Activated CD8-positive, alpha-beta T cell treated with anti-CD3 and anti-CD28 coated beads for 36 hours (primary cell): ENCODE measurements at regions of chr3 and their contacts with region 1.

Region 1: GRCh38 chr3:40452876-40453730 is 4.0 kb upstream of the RPL14 start:
- DNase-seq: peak; percentile 99
- ATAC-seq: peak; percentile 93
- H3K4me3 Mint-ChIP-seq: peak overlapping the region; percentile 94
- H3K27ac Mint-ChIP-seq: peak overlapping the region; percentile 93
- H3K4me1 Mint-ChIP-seq: peaks cover 33% of the 10 kb centered on the region
- H3K27me3 Mint-ChIP-seq: no peaks in the 10 kb centered on the region
- CTCF ChIP-seq: no peak

Region 2: GRCh38 chr3:40309418-40309924 is 143.6 kb before region 1 on chr3 and contains the start of gene EIF1B:
- CTCF ChIA-PET with region 1: interaction called, 5 read pairs
- POLR2A ChIA-PET with region 1: interaction called, 4 read pairs
- intact Hi-C with region 1: loop called (anchors 5 kb)
- DNase-seq: peak; percentile 99
- ATAC-seq: peak; percentile 88
- H3K4me3 Mint-ChIP-seq: peak within 1 kb of the TSS; percentile 98
- H3K27ac Mint-ChIP-seq: peak within 1 kb of the TSS; percentile 97
- H3K4me1 Mint-ChIP-seq: peaks cover 24% of the 10 kb centered on the region
- H3K27me3 Mint-ChIP-seq: no peaks in the 10 kb centered on the region
- CTCF ChIP-seq: peak; percentile 73
- total RNA-seq, gene EIF1B: 38.2 to 42.3 TPM

Region 3: GRCh38 chr3:40329071-40329470 is 124.0 kb before region 1 on chr3:
- CTCF ChIA-PET with region 1: interaction called, 13 read pairs
- POLR2A ChIA-PET with region 1: interaction called, 3 read pairs
- intact Hi-C with region 1: no loop called
- DNase-seq: no peak
- ATAC-seq: no peak
- H3K4me3 Mint-ChIP-seq: no peak overlapping the region
- H3K27ac Mint-ChIP-seq: no peak overlapping the region
- H3K4me1 Mint-ChIP-seq: peaks cover 3% of the 10 kb centered on the region
- H3K27me3 Mint-ChIP-seq: no peaks in the 10 kb centered on the region
- CTCF ChIP-seq: no peak

Region 4: DNA sequence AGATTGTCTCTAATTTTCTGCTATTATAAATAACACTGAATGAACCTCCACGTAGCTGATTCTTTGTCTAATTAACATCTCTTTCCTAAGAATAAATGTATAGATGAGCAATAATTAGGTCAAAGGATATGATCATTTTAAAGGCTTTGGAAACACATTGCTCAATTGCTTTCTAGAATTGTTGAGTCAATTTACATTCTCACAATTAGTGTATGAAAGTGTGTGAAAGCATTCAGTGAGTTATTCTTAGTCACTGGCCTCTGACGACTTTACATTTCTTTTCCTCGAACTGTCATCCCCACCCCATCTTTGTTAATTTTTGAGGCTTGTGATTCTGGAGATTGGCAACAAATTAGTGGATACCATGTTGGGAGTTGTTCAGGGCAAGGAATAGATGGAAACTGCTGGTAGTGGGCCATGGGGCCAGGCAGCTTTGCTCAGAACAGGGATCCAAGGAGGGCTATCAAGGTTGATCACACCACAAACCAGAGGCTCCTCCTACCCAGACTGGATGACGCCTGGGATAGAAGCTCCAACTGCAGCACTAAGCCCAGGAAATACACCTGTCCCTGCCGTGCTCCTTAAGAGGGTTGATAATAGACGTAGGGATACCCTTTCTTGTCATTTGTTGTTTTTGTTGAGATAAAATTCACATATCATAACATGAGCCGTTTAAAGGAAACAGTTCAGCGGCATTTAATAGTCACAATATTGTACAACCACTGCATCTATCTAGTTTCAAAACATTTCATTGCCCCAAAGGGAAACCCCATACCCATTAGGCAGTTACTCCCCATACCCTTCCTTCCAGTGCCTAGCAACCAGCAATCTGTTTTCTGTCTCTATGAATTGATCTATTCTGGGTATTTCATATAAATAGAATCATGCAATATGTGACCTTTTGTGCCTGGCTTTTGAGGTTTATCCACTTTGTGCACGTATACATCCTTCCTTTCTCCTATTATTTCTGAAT is 115.7 kb before region 1 on chr3:
- CTCF ChIA-PET with region 1: no interaction called
- POLR2A ChIA-PET with region 1: interaction called, 4 read pairs
- intact Hi-C with region 1: loop called (anchors 5 kb)
- DNase-seq: no peak
- ATAC-seq: peak; percentile 78
- H3K4me3 Mint-ChIP-seq: no peak overlapping the region
- H3K27ac Mint-ChIP-seq: peak overlapping the region; percentile 53
- H3K4me1 Mint-ChIP-seq: peaks cover 8% of the 10 kb centered on the region
- H3K27me3 Mint-ChIP-seq: no peaks in the 10 kb centered on the region
- CTCF ChIP-seq: no peak

Region 5: GRCh38 chr3:40404591-40405198 is 48.4 kb before region 1 on chr3:
- CTCF ChIA-PET with region 1: no interaction called
- POLR2A ChIA-PET with region 1: no interaction called
- intact Hi-C with region 1: no loop called
- DNase-seq: no peak
- ATAC-seq: no peak
- H3K4me3 Mint-ChIP-seq: no peak overlapping the region
- H3K27ac Mint-ChIP-seq: no peak overlapping the region
- H3K4me1 Mint-ChIP-seq: no peaks in the 10 kb centered on the region
- H3K27me3 Mint-ChIP-seq: peaks cover 3% of the 10 kb centered on the region
- CTCF ChIP-seq: no peak

Region 6: GRCh38 chr3:40417845-40418543 is 35.1 kb before region 1 on chr3:
- CTCF ChIA-PET with region 1: no interaction called
- POLR2A ChIA-PET with region 1: no interaction called
- intact Hi-C with region 1: no loop called
- DNase-seq: no peak
- ATAC-seq: peak; percentile 30
- H3K4me3 Mint-ChIP-seq: no peak overlapping the region
- H3K27ac Mint-ChIP-seq: no peak overlapping the region
- H3K4me1 Mint-ChIP-seq: peaks cover 4% of the 10 kb centered on the region
- H3K27me3 Mint-ChIP-seq: peaks cover 9% of the 10 kb centered on the region
- CTCF ChIP-seq: no peak

Region 7: DNA sequence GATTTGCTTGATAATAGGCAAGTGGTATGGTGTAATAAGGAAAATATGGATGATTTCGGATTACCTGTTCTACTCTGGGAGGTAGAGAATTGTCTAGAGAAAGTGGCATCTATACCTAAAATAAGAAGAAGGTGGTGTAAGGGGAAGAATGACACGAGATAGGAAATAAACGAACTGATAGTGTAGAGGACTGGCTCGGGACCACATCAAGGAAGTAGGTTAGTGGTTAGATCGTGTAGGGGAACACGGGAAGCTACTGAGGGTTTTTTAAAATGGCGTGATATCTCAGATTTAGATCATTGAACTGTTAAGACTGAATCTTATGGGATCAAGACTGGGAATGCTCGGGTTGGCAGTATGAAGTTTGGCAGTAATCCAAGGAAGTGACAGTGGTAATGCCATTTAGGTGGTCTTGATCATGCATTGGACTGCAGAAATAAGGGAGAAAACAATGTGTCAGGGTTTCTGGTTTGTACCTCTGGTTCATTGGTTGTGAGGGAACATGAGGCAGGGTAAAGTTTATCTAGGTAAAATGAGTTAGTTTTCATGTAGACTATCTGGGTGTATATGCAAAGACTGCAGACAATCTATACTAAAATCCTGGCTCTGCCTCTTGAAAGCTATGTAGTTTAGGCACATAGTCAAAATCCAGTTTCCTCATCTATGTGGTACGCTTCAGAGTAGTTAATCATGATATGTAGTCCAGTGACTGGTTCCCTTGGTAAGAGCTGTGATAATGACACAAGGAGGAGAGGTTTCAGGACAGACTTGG is 11.4 kb after region 1 on chr3:
- CTCF ChIA-PET with region 1: interaction called, 4 read pairs
- POLR2A ChIA-PET with region 1: interaction called, 38 read pairs
- intact Hi-C with region 1: no loop called
- DNase-seq: peak; percentile 29
- ATAC-seq: peak; percentile 69
- H3K4me3 Mint-ChIP-seq: no peak overlapping the region
- H3K27ac Mint-ChIP-seq: peak overlapping the region; percentile 78
- H3K4me1 Mint-ChIP-seq: peaks cover 32% of the 10 kb centered on the region
- H3K27me3 Mint-ChIP-seq: no peaks in the 10 kb centered on the region
- CTCF ChIP-seq: no peak

Region 8: DNA sequence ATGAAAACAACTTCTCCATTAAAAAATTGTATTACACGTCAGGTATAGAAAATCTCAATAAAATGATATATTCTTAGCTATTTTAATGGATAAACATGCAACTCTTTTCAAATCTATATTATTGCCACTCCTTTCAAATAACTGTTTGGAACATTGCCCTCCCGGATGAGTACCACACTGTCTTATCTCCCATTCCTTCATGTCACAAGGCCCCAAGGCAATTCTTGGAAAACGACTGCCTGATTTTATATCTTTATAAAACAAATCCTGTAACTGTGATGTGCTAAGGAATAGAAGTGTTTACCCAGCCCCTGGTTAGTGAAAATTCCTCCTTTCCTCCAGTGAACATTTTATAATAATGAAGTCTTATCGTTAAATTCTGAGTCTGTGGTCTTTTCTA is 17.6 kb after region 1 on chr3:
- CTCF ChIA-PET with region 1: no interaction called
- POLR2A ChIA-PET with region 1: interaction called, 26 read pairs
- intact Hi-C with region 1: no loop called
- DNase-seq: no peak
- ATAC-seq: no peak
- H3K4me3 Mint-ChIP-seq: no peak overlapping the region
- H3K27ac Mint-ChIP-seq: no peak overlapping the region
- H3K4me1 Mint-ChIP-seq: no peaks in the 10 kb centered on the region
- H3K27me3 Mint-ChIP-seq: no peaks in the 10 kb centered on the region
- CTCF ChIP-seq: no peak

Region 9: DNA sequence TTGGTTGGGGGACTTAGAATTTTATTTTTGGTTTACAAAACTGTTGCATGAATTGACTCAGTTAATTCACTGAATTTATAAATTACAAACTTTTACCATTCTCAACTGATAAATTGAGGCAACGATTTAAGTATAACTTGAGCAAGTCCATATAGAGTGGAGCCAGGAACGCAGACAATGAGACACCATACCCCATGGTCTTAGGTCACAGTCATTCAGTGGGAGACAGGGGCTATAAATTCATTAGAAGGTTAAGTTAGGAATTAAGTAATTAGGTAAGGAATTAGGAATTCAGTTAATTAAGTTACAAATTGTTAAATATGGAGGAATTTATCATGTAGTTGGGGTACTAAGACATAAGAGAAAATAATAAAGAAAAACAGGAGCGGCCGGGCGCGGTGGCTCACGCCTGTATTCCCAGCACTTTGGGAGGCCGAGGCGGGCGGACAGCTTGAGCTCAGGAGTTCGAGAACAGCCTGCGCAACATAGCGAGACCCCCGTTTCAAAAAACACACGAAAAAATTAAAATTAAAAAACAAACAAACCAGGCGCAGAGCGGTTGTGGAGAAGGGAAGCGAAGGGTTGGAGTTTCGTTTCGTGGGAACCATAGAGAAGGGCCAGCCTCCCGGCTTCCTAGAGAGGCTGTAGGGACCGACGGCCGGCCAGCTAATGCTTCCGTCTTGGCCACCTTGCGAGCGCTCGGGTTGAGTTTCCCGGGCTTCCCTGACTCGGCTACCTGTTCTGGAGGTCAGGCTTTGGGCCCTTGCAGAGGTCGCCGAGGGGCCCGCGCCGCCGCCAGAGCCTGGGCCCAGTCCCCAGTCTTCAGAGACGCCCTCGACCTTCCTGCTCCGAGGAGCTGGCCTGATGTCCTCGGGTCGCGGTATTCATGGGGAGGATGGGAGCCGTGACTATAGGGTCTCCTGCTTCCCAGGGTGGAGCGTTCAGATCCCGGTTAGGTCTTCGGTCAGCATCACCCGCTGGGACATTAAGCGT is 23.7 kb after region 1 on chr3 and contains the start of gene ZNF619:
- CTCF ChIA-PET with region 1: no interaction called
- POLR2A ChIA-PET with region 1: interaction called, 26 read pairs
- intact Hi-C with region 1: no loop called
- DNase-seq: peak; percentile 60
- ATAC-seq: peak; percentile 87
- H3K4me3 Mint-ChIP-seq: peak within 1 kb of the TSS; percentile 82
- H3K27ac Mint-ChIP-seq: peak within 1 kb of the TSS; percentile 87
- H3K4me1 Mint-ChIP-seq: peaks cover 19% of the 10 kb centered on the region
- H3K27me3 Mint-ChIP-seq: no peaks in the 10 kb centered on the region
- CTCF ChIP-seq: no peak
- total RNA-seq, gene ZNF619: 5.7 to 6.3 TPM

Region 10: GRCh38 chr3:40765884-40766283 is 312.8 kb after region 1 on chr3:
- CTCF ChIA-PET with region 1: no interaction called
- POLR2A ChIA-PET with region 1: no interaction called
- intact Hi-C with region 1: no loop called
- DNase-seq: no peak
- ATAC-seq: no peak
- H3K4me3 Mint-ChIP-seq: no peak overlapping the region
- H3K27ac Mint-ChIP-seq: no peak overlapping the region
- H3K4me1 Mint-ChIP-seq: no peaks in the 10 kb centered on the region
- H3K27me3 Mint-ChIP-seq: no peaks in the 10 kb centered on the region
- CTCF ChIP-seq: no peak